Adrenal gland (tissue), 19 donors: ENCODE measurements at regions of chr15 and their contacts with region 1.

Region 1: DNA sequence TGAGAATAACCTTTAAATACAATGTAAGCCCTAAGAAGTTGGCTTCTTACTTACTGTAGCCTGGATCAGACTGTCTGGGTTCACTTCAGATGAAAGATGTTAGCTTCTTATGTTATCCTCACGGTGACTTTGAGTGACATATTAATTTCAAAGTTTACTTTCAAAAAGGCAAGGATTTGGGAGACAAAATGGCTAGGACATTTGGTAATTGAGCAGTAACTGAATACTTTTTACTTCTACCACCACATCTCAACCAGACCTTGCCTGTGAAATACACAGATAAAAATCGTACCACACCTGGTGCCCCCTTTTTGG is 36.0 kb upstream of the BNIP2 start:
- DNase-seq: no peak
- H3K4me3 ChIP-seq: no peak overlapping the region
- H3K27ac ChIP-seq: no peak overlapping the region
- H3K4me1 ChIP-seq: no peaks in the 10 kb centered on the region
- H3K27me3 ChIP-seq: peaks cover 7% of the 10 kb centered on the region
- CTCF ChIP-seq: no peak
- POLR2A ChIP-seq: no peak

Region 2: DNA sequence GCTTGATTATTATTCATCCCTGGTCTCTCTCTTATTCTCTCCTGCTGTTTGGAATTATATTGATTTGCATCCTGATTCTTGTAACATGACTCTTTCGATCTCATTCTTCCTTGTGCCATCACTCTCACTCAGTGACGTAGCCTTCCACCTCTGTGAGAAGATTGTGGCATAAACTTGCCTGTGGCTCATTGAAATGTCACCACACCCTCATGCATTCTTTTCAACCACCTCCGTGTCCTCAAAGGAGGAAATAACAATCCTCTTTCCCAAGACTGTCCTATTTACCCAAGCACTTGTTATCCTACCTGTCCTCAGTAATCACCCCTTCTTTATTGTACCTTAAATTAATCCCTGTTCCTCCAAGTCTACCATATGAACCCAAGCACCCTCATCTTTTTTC is 154.8 kb before region 1 on chr15:
- intact Hi-C with region 1: no loop called
- DNase-seq: no peak
- H3K4me3 ChIP-seq: no peak overlapping the region
- H3K27ac ChIP-seq: no peak overlapping the region
- H3K4me1 ChIP-seq: no peaks in the 10 kb centered on the region
- H3K27me3 ChIP-seq: peaks cover 5% of the 10 kb centered on the region
- CTCF ChIP-seq: no peak
- POLR2A ChIP-seq: no peak

Region 3: DNA sequence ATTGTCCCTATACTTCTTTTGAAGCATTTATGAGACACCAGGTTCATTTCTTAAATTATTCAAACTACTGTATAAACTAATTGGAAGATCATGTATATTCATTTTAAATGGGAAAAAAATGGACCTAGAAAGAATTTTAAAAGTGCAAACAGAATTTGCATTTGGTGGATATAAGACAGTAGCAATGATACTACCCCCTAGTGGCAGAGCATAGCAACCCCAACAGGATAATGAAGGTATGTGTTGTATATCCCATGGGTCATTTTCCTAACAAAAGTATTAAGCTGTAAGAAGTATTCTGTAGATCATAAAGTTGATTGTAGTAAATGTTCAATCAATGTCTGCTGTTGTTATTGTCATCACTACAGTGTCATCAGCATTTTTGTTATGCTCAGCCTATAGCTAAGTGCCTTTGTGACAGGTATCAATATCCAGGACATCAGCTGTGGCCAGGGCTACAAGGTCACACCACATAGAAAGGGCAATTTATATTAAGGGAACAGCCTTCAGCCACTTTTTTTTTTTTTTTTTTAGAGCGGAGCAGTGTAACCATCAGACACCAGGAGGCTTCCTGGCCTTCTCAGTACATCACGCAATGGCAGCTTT is 454.8 kb after region 1 on chr15:
- intact Hi-C with region 1: loop called in 1 of 2 experiments (anchors 10 kb)
- DNase-seq: peak in 6 of 7 donors; percentile 20 to 59 (median 38)
- H3K4me3 ChIP-seq: no peak overlapping the region
- H3K27ac ChIP-seq: no peak overlapping the region
- H3K4me1 ChIP-seq: peaks cover 0 to 3% of the 10 kb centered on the region in 2 donors
- H3K27me3 ChIP-seq: peaks cover 7% of the 10 kb centered on the region
- CTCF ChIP-seq: peak; percentile 52 to 83 (median 72)
- POLR2A ChIP-seq: no peak

Region 4: DNA sequence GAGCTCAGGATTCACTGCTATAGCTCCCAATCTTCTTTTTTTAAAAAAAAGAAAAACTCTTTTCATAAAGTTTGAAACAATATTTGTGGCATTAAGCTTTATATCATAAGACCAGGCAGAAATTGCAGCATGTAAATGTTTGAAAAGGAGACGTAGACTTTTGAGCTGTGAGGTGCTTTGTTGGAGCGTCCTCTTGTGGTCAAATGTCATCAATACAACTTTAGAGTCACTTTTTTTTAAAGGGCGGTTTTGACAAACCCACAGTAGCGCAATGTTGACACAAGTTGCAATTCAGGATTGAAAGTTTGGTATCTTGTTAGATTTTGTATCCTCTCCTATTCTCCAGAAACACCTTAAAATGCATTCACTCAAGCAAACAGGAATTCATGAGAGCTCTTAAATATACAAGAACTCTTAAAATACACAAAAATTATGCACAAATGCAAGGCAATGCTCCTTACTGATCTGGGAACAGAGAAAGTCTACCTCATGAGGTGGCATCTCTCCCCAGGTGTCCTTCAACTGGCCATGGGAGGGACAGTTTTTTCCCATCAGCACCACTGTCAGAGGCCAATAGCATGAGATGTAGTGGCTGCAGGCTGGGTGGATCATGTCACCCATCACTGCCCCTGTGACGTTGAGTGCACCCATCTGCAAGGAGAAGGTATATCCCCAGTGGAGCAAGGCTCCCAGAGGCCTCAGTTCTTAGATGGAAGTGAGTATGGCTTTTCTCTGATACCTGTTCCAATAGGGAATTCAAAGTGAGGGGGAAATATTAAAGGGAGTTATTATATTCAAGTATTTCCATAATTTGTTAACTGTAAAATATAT is 601.9 kb after region 1 on chr15:
- intact Hi-C with region 1: loop called (anchors 10 kb)
- DNase-seq: peak in 2 of 7 donors; percentile 31 to 36
- H3K4me3 ChIP-seq: no peak overlapping the region
- H3K27ac ChIP-seq: no peak overlapping the region
- H3K4me1 ChIP-seq: no peaks in the 10 kb centered on the region
- H3K27me3 ChIP-seq: peaks cover 33% of the 10 kb centered on the region
- CTCF ChIP-seq: peak; percentile 77 to 86 (median 82)
- POLR2A ChIP-seq: no peak